Stomach (tissue), 19 donors: ENCODE measurements at regions of chr13 and their contacts with region 1.

Region 1: DNA sequence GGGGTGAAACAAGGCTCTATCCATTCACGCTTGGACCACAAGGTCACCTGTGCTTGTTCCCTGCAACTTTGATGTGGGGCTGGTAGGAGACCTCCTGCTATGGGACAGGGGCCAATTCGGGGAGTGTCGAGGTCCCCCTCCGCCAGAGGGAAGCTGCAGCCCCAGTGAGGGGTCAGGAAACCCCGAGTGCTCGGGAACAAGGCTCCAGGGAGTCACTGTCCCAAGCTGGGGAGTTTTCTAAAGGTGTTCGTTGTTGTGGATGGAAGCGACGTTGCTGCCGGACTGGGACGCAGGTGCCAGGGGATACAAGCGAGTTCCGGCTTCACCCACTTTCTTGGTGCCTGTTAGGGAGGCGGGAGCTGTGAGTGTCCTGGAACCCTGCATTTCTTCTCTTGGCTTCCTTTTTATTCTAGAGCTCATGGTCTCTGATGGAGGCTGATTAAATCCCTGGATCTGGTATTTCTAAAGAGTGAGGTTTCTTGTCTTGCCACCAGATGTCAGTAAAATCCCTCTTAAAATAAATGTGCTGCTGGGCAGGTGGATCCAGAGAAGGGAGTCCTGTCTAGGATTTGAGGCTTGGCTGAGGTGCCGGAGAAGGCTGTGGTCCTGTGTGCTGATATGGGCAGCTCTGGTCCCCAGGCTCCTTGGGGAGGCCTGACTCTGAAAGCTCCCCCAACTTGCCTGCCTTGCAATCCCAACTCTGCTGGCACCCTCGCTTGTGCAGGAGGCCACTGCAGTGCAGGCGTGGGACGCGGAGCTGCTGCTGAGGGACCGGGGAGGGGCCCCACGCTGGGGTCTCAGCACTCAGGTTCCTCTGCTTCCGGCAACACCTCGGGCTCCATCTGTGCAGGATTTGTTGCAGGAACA is 153.9 kb downstream of the TEX29 start:
- DNase-seq: peak in 1 of 2 donors; percentile 75
- H3K4me3 ChIP-seq: no peak overlapping the region
- H3K27ac ChIP-seq: no peak overlapping the region
- H3K4me1 ChIP-seq: no peaks in the 10 kb centered on the region
- H3K27me3 ChIP-seq: peaks cover 0 to 42% (median 0%) of the 10 kb centered on the region in 3 donors
- CTCF ChIP-seq: peak in 5 of 7 experiments; percentile 28 to 63 (median 46)
- EP300 ChIP-seq: no peak
- POLR2A ChIP-seq: no peak

Region 2: GRCh38 chr13:111913366-111914081 is 439.2 kb after region 1 on chr13:
- intact Hi-C with region 1: no loop called
- DNase-seq: peak in 1 of 2 donors; percentile 18
- H3K4me3 ChIP-seq: no peak overlapping the region
- H3K27ac ChIP-seq: no peak overlapping the region
- H3K4me1 ChIP-seq: no peaks in the 10 kb centered on the region
- H3K27me3 ChIP-seq: peaks cover 0 to 41% (median 0%) of the 10 kb centered on the region in 3 donors
- CTCF ChIP-seq: no peak
- EP300 ChIP-seq: no peak
- POLR2A ChIP-seq: no peak

Region 3: DNA sequence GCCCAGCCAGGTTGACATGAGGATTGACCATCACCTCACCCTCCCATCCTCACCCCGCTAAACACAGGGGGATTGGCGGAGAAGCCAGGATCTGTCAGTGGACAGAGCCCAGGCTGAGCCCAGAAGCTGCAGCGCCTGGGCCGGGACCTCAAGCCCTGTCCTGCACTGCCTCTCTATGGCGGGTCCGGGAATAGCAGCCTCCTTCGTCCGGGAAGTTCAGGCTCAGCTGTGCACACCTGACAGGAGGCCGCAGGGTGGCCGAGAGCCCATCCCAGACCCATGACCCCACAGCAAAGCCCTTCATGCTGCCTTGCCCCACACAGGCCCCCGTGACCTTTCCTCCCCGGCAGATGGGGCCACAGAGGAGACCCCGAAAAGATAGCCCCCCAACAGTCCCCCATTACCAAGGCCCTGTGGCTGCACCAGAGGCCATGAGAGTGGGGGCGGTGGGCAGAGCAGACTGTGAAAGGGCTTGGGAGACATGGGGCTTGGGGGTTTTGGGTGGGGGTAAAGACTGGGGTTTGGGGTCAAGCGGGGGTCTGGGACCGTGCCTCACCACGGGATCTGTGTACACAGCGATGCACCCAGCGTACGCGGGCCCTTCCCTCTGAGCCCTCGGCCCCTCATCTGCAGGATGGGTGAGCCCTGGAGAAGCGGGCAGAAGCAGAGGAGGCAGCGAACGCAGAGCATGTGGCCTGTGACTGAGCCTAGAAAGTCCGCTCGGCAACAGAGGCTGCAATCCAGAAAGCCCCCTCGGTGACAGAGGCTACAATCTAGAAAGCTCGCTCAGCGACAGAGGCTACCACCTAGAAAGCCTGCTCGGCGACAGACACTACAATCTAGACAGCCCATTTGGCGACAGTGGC is 969.9 kb after region 1 on chr13:
- intact Hi-C with region 1: loop called (anchors 5 kb)
- DNase-seq: peak; percentile 75 to 87
- H3K4me3 ChIP-seq: no peak overlapping the region
- H3K27ac ChIP-seq: no peak overlapping the region
- H3K4me1 ChIP-seq: peaks cover 0 to 17% (median 6%) of the 10 kb centered on the region in 4 donors
- H3K27me3 ChIP-seq: peaks cover 5 to 84% (median 38%) of the 10 kb centered on the region in 3 donors
- CTCF ChIP-seq: peak in 5 of 7 experiments; percentile 48 to 81 (median 75)
- EP300 ChIP-seq: no peak
- POLR2A ChIP-seq: no peak

Region 4: GRCh38 chr13:112606109-112607001 is 1132.0 kb after region 1 on chr13:
- intact Hi-C with region 1: loop called (anchors 10 kb)
- DNase-seq: peak; percentile 95 to 97
- H3K4me3 ChIP-seq: peak overlapping the region; percentile 38 to 50 (median 41)
- H3K27ac ChIP-seq: peak overlapping the region; percentile 46 to 77 (median 72)
- H3K4me1 ChIP-seq: peaks cover 5 to 22% (median 13%) of the 10 kb centered on the region in 4 donors
- H3K27me3 ChIP-seq: peaks cover 0 to 4% (median 0%) of the 10 kb centered on the region in 3 donors
- CTCF ChIP-seq: peak in 5 of 7 experiments; percentile 85 to 96 (median 92)
- EP300 ChIP-seq: no peak
- POLR2A ChIP-seq: no peak